Sciatic nerve (tissue), 2 donors: ENCODE measurements at regions of chr17 and their contacts with region 1.

Region 1: DNA sequence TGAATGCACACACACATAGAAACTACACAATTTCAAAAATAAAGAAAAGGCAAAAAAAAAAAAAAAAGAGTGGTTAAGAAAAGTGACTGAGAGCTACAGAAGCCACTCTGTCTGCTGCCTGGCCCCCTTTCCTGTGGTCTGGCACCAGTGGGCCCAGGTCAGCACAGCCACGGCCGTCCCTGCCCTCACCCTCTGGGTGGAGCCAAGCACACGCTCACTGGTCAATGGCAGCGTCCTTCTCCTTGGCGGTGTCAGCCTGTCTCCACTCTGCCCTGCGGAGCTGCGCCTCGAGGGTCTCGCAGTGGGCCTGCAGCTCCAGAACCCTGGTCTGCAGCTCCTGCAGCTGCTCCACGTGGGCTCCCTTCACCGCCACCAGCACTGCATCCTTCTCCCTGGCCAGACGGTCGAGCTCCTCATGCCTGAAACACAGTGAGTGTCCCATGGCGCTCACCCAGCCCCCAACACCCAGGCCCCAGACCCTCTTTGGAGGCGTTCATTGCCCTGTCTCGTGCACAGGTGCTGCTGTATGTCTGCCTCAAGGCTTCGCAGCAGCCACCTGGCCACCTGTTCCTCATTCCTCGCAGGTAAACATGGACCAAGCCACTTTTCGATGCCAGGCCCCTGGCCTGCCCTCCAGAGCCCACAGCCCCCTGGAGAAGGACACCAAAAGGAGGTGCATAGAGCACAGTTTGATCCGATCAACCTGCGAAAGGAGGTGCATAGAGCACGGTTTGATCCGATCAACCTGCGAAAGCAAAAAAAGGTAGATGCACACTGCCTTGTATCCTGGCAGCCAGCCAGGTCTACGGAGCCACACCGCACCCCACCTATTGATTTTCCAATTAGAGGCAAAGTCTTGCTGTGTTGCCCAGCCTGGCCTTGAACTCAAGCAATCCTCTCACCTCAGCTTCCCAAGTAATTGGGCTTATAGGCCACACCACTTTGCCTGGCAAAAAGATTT is 24.4 kb downstream of the CCDC57 start:
- DNase-seq: no peak
- ATAC-seq: peak; percentile 28

Region 2: GRCh38 chr17:81641825-81642489 is 546.3 kb before region 1 on chr17:
- intact Hi-C with region 1: loop called (anchors 10 kb)
- DNase-seq: no peak
- ATAC-seq: no peak

Region 3: DNA sequence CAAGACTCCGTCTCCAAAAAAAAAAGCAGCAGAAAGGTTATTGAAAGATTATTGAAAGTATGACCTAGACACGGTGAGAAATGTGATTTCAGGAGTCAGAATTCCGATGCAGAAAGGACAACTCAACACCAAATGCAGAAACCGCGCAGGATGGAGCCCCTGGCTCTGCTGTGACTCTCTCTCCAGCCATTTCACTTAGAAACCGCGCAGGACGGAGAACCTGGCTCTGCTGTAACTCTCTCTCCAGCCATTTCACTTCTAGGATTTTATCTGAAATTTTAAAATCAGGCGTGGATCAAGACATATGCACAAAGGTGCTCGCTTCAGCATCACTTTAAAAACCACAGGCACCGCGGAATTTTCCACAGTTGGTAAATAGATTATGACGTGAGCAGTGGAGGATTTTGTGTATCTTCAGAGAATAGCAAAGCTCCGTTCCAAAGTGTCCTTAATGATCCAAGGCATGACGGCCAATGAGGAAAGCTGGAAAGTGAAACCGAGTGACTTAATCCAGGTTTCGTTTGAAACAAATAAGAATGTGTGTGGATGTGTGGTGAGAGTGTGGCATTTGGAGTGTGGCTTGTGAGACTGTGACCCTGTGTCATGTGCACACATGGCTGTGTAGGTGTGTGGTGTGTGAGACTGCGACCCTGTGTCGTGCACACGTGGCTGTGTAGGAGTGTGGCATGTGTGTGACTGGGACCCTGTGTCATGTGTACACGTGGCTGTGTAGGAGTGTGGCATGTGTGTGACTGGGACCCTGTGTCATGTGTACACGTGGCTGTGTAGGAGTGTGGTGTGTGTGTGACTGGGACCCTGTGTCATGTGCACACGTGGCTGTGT is 192.8 kb after region 1 on chr17:
- intact Hi-C with region 1: no loop called
- DNase-seq: no peak
- ATAC-seq: no peak